Endothelial cell of umbilical vein (primary cell): ENCODE measurements at regions of chr4 and their contacts with region 1.

Region 1: GRCh38 chr4:168318266-168318895 is at the start of gene DDX60:
- DNase-seq: peak; percentile 75
- H3K4me3 ChIP-seq: peak within 1 kb of the TSS; percentile 73 to 98 (median 97)
- H3K27ac ChIP-seq: peak within 1 kb of the TSS; percentile 92
- H3K4me1 ChIP-seq: peaks cover 4% of the 10 kb centered on the region
- H3K27me3 ChIP-seq: no peaks in the 10 kb centered on the region
- CTCF ChIP-seq: peak; percentile 48 to 61
- POLR2A ChIP-seq: peak; percentile 26
- total RNA-seq, gene DDX60: 7.9 and 9.3 TPM in 2 replicates

Region 2: DNA sequence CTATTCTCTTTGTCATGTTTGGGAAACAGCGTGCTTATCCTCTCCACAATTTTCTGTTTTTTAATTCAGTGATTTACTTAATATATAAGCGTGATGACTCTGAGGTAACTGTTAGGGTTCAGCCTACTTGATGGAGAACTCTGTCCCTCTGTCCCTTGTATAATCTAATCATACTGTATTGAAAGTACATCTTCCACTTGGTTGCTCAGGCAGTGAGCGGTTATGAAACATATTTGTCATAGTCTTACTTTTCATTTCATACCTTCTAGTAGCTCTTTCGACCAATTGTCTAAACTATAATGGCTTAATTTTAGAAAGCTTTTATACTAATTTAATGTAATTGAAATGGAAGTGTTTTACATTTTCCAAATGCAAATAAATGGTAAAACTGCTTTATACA is 1976.4 kb before region 1 on chr4:
- CTCF ChIA-PET with region 1: no interaction called
- POLR2A ChIA-PET with region 1: no interaction called
- dilution Hi-C with region 1: no loop called
- intact Hi-C with region 1: loop called (anchors 5 kb)
- DNase-seq: no peak
- H3K4me3 ChIP-seq: no peak overlapping the region
- H3K27ac ChIP-seq: no peak overlapping the region
- H3K4me1 ChIP-seq: no peaks in the 10 kb centered on the region
- H3K27me3 ChIP-seq: no peaks in the 10 kb centered on the region
- CTCF ChIP-seq: no peak
- POLR2A ChIP-seq: no peak

Region 3: DNA sequence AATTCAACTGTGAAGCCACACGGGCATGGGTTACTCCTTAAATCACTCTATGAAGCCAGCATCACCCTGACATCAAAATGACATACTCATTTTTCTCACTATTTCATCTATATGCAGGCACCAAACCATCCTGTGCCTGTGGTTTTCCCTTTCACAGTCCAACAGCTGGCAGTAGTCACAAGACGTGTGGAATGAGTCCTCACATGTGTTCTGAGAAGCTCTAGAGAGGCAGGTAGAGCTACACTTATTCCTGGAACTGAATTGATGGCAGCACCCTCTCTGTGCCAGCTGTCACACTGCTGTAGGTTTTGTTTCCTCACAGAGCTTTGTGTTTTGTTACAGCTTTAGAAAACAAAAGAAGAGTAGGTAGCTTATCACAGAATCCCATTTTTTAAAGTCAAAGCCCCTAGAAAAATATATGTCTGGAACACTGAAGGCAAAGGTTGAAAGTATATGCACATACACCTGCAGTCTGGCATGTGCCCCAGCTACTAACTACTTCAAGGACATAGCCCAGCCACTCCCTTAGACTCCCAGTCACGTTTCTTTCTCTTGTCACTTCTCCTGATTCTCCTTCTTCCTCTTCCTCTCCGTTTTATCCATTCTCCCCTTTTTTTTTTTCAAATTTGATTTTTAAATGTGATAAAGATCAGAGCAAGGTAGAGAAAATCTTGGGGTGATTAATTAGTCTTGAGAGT is 119.0 kb before region 1 on chr4:
- CTCF ChIA-PET with region 1: no interaction called
- POLR2A ChIA-PET with region 1: no interaction called
- dilution Hi-C with region 1: no loop called
- intact Hi-C with region 1: no loop called
- DNase-seq: no peak
- H3K4me3 ChIP-seq: no peak overlapping the region
- H3K27ac ChIP-seq: no peak overlapping the region
- H3K4me1 ChIP-seq: peaks cover 3% of the 10 kb centered on the region
- H3K27me3 ChIP-seq: no peaks in the 10 kb centered on the region
- CTCF ChIP-seq: no peak
- POLR2A ChIP-seq: no peak

Region 4: GRCh38 chr4:168291242-168291641 is 27.1 kb before region 1 on chr4:
- CTCF ChIA-PET with region 1: no interaction called
- POLR2A ChIA-PET with region 1: no interaction called
- dilution Hi-C with region 1: no loop called
- intact Hi-C with region 1: no loop called
- DNase-seq: no peak
- H3K4me3 ChIP-seq: no peak overlapping the region
- H3K27ac ChIP-seq: no peak overlapping the region
- H3K4me1 ChIP-seq: no peaks in the 10 kb centered on the region
- H3K27me3 ChIP-seq: no peaks in the 10 kb centered on the region
- CTCF ChIP-seq: no peak
- POLR2A ChIP-seq: no peak

Region 5: GRCh38 chr4:168367065-168367464 is 48.7 kb after region 1 on chr4:
- CTCF ChIA-PET with region 1: no interaction called
- POLR2A ChIA-PET with region 1: no interaction called
- dilution Hi-C with region 1: no loop called
- intact Hi-C with region 1: no loop called
- DNase-seq: no peak
- H3K4me3 ChIP-seq: no peak overlapping the region
- H3K27ac ChIP-seq: no peak overlapping the region
- H3K4me1 ChIP-seq: no peaks in the 10 kb centered on the region
- H3K27me3 ChIP-seq: no peaks in the 10 kb centered on the region
- CTCF ChIP-seq: no peak
- POLR2A ChIP-seq: no peak

Region 6: GRCh38 chr4:168388890-168389289 is 70.5 kb after region 1 on chr4:
- CTCF ChIA-PET with region 1: no interaction called
- POLR2A ChIA-PET with region 1: no interaction called
- dilution Hi-C with region 1: no loop called
- intact Hi-C with region 1: loop called (anchors 2 kb)
- DNase-seq: peak; percentile 92
- H3K4me3 ChIP-seq: no peak overlapping the region
- H3K27ac ChIP-seq: peak overlapping the region; percentile 72
- H3K4me1 ChIP-seq: peaks cover 47% of the 10 kb centered on the region
- H3K27me3 ChIP-seq: no peaks in the 10 kb centered on the region
- CTCF ChIP-seq: no peak
- POLR2A ChIP-seq: no peak

Region 7: GRCh38 chr4:168421671-168422070 is 103.3 kb after region 1 on chr4:
- CTCF ChIA-PET with region 1: interaction called, 3 read pairs
- POLR2A ChIA-PET with region 1: no interaction called
- dilution Hi-C with region 1: no loop called
- intact Hi-C with region 1: loop called (anchors 5 kb)
- DNase-seq: peak; percentile 98
- H3K4me3 ChIP-seq: no peak overlapping the region
- H3K27ac ChIP-seq: peak overlapping the region; percentile 76
- H3K4me1 ChIP-seq: peaks cover 21% of the 10 kb centered on the region
- H3K27me3 ChIP-seq: no peaks in the 10 kb centered on the region
- CTCF ChIP-seq: no peak
- POLR2A ChIP-seq: peak; percentile 69

Region 8: DNA sequence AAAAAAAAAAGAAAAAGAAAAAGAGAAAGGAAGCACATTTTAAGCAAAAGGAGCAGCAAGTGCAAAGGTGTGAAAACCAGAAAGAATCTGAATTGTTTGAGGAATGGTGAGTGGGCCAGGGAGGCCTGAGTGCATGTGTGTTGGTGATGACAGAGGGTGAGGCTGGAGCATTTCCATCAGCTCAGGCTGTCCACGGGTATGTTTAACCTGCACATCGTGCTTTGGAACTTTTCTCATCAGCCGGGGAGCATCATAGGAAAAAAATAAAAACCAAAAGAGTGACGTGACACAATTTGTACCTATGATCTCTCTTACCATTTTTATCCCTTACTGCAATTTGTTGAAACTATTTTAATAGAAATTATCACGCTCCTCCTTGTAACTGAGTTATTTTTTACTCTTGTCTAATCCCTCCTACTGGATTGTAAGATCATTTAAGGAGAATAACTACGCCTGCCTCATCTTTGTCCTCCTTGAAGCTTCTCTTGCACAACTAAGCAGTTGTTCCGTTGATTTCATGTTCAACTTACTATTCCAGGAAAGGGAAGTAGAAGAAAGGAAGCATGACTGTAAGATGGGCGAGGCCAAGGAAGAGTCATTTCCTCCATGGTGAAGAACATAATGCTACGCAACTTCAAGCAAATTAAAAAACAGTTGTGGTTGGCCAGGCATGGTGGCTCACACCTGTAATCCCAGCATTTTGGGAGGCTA is 185.4 kb after region 1 on chr4:
- CTCF ChIA-PET with region 1: no interaction called
- POLR2A ChIA-PET with region 1: no interaction called
- dilution Hi-C with region 1: no loop called
- intact Hi-C with region 1: loop called (anchors 1 kb)
- DNase-seq: peak; percentile 43
- H3K4me3 ChIP-seq: no peak overlapping the region
- H3K27ac ChIP-seq: no peak overlapping the region
- H3K4me1 ChIP-seq: peaks cover 5% of the 10 kb centered on the region
- H3K27me3 ChIP-seq: no peaks in the 10 kb centered on the region
- CTCF ChIP-seq: no peak
- POLR2A ChIP-seq: no peak